Activated CD4-positive, alpha-beta T cell treated with anti-CD3 and anti-CD28 coated beads, Interleukin-2, amount 10 ng/mL, durations not matched to agents 24 days and 14 days (primary cell): ENCODE measurements at regions of chr19 and their contacts with region 1.

Region 1: DNA sequence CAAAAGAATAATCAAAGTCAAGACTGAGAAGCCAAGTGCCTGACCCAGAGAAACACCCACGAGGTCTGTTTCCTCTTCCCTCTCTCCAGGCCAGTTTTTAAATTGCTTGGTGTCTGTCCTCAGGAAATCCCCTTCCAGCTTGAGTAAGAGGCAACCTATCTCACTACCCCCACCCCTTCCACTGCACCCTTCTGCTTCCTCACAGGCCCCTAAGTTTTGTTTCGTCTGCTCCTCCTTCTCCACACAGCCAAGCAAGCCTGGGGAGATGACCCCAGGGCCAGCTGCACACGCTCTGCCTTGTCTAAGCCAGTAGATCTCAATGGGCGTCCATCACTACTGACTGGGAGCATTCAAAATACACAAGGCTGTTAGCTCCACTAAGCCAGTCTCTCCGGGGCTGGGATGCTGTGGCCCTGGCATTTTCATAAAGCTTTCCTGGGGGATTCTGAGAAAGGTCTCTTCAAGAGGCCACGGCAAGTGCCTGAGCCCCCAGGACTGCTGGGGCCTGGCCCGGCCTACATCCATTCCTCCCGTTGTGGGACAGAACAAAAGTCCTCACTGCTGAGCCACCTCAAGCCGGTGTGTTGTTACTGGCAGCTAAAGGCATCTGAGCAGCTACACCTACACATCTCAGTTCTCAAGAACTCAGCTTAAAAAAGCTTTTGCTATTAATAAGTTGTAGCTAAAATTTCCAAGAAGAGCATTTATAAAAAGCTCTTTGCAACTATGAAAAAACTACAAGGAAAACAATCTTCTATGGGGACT is 14.9 kb upstream of the IL4I1 start:
- DNase-seq: peak; percentile 70
- H3K4me3 Mint-ChIP-seq: peak overlapping the region; percentile 72
- H3K27ac Mint-ChIP-seq: peak overlapping the region; percentile 94
- H3K4me1 Mint-ChIP-seq: peaks cover 65% of the 10 kb centered on the region
- H3K27me3 Mint-ChIP-seq: no peaks in the 10 kb centered on the region

Region 2: GRCh38 chr19:49631014-49631588 is 280.5 kb before region 1 on chr19:
- intact Hi-C with region 1: no loop called
- DNase-seq: no peak
- H3K4me3 Mint-ChIP-seq: no peak overlapping the region
- H3K27ac Mint-ChIP-seq: no peak overlapping the region
- H3K4me1 Mint-ChIP-seq: no peaks in the 10 kb centered on the region
- H3K27me3 Mint-ChIP-seq: no peaks in the 10 kb centered on the region

Region 3: GRCh38 chr19:49896863-49897621 is 14.5 kb before region 1 on chr19 and contains the start of gene IL4I1:
- intact Hi-C with region 1: loop called (anchors 1 kb)
- DNase-seq: peak; percentile 88
- H3K4me3 Mint-ChIP-seq: peak within 1 kb of the TSS; percentile 89
- H3K27ac Mint-ChIP-seq: peak within 1 kb of the TSS; percentile 100
- H3K4me1 Mint-ChIP-seq: peaks cover 51% of the 10 kb centered on the region
- H3K27me3 Mint-ChIP-seq: peaks cover 2% of the 10 kb centered on the region
- total RNA-seq, gene IL4I1: 40.4 and 41.4 TPM in 2 replicates

Region 4: DNA sequence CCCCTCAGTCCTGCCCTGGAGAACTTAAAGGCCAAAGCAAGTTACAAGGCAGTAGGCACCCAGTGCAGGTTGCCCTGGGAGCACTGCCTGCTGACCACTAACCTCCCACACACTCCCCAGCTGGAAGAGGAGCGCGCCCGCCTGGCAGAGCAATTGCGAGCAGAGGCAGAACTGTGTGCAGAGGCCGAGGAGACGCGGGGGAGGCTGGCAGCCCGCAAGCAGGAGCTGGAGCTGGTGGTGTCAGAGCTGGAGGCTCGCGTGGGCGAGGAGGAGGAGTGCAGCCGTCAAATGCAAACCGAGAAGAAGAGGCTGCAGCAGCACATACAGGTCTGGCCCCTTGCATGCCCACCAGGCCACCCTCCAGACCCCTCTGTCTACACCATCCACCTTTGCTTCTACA is 356.5 kb after region 1 on chr19:
- intact Hi-C with region 1: no loop called
- DNase-seq: no peak
- H3K4me3 Mint-ChIP-seq: no peak overlapping the region
- H3K27ac Mint-ChIP-seq: no peak overlapping the region
- H3K4me1 Mint-ChIP-seq: no peaks in the 10 kb centered on the region
- H3K27me3 Mint-ChIP-seq: peaks cover 6% of the 10 kb centered on the region